ENCODE measurements at regions of chr3 and their contacts with region 1.

Region 1: DNA sequence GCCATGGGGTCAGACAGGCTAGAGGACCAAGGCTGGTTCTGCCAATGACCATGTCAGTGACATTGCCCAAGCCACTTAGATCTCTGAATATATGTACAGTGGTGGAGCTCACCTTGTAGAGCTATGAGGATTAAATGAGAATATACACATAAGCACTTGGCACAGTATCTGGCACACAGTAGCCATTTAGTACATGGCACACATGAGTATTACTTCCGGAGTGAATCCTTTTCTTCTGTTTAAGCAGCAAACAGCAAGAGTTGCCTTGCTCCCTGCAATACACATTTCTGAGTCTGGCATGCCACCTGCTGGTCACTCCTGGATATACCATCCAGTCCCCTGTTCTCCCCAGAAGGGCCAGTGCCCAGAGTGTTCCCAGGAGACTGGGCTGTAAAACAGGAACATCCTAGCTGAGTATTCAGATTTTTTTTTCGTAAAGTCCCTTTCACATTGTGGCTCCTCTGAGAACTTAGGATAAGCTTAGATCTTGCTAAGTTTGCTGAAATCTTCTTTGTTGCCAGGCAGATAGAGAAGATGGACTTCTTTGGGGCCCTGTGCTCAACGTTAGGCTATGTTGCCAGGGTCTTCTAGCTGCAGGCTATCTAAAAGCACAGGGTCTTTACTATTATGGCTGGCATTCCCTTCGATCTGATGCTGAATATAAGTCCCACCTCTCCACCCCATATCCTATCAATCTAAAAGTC is 203.4 kb downstream of the ADAMTS9 start:
- DNase-seq: peak; percentile 76
- H3K4me3 ChIP-seq: no peak overlapping the region; a peak in 1 of 4 replicates
- H3K27ac ChIP-seq: no peak overlapping the region
- H3K4me1 ChIP-seq: peaks cover 0 to 3% of the 10 kb centered on the region in 2 experiments; a peak in 1 of 4 replicates
- H3K27me3 ChIP-seq: no peaks in the 10 kb centered on the region
- CTCF ChIP-seq: peak; percentile 91
- EP300 ChIP-seq: no peak
- RAD21 ChIP-seq: peak; percentile 100

Region 2: DNA sequence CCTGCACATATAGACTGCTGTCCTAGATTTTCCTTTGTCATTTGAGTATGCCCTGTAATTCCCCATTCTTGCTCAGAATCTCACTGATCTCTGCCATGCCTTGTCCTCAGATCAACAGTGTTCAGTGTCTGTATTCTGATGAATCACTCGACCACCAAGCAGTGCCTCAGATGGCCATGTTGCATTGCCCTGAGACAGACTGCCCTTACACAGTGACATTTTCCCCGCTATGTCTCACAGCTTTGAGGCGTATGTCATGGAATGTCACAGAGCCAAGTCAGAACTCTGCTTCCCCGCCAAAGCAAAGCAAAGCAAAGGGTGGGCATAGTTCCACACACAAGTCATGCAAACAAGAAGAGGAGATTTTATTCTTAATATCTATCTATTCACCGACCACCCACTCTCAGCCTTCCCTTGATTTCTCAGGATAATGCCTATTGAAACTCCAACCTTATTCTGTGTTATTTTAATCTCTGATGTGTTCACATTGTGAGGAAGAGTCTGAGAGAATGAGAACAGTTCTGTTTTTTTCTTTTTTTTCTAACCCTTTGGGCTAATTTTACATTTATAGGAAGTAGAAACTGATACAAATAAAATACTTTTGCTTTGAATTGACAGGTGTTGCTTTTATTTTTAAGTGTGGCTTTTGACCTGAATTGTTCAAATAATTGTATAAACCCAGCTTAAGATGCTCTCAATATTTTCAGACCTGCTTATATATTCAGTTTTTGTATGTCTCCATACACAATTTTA is 444.3 kb before region 1 on chr3:
- CTCF ChIA-PET with region 1: interaction called, 84 read pairs
- POLR2A ChIA-PET with region 1: no interaction called
- DNase-seq: peak; percentile 24
- H3K4me3 ChIP-seq: no peak overlapping the region
- H3K27ac ChIP-seq: no peak overlapping the region
- H3K4me1 ChIP-seq: peaks cover 0 to 10% of the 10 kb centered on the region in 2 experiments; a peak in 2 of 4 replicates
- H3K27me3 ChIP-seq: no peaks in the 10 kb centered on the region
- CTCF ChIP-seq: no peak
- EP300 ChIP-seq: no peak
- RAD21 ChIP-seq: no peak

Region 3: DNA sequence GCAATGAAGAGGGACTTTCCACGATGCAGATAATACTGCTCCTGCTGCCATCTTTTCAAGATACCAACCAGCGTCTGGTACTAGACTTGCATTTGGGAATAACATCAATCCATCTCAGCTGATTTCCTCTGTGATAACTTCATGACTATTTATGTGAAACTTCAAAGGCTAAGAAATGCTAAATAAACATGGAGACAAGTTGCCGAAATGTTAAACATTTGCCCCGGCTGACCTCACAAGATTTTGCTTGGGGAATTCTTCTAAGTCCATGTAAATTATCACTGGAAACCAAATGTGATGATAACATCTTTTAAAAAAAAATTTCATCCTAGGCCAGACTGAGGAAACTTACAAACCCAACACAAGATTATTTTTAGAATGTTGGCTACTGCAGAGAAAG is 73.3 kb before region 1 on chr3:
- CTCF ChIA-PET with region 1: interaction called, 15 read pairs
- POLR2A ChIA-PET with region 1: no interaction called
- DNase-seq: no peak
- H3K4me3 ChIP-seq: no peak overlapping the region
- H3K27ac ChIP-seq: no peak overlapping the region
- H3K4me1 ChIP-seq: no peaks in the 10 kb centered on the region
- H3K27me3 ChIP-seq: no peaks in the 10 kb centered on the region
- CTCF ChIP-seq: no peak
- EP300 ChIP-seq: no peak
- RAD21 ChIP-seq: no peak

Region 4: GRCh38 chr3:64445321-64446300 is 38.8 kb before region 1 on chr3:
- CTCF ChIA-PET with region 1: interaction called, 17 read pairs
- POLR2A ChIA-PET with region 1: no interaction called
- DNase-seq: peak; percentile 83
- H3K4me3 ChIP-seq: peak overlapping the region; percentile 73 to 78
- H3K27ac ChIP-seq: no peak overlapping the region; a peak in 1 of 4 replicates
- H3K4me1 ChIP-seq: peaks cover 0 to 27% of the 10 kb centered on the region in 2 experiments; a peak in 2 of 4 replicates
- H3K27me3 ChIP-seq: no peaks in the 10 kb centered on the region
- CTCF ChIP-seq: no peak
- EP300 ChIP-seq: no peak
- RAD21 ChIP-seq: no peak

Region 5: GRCh38 chr3:64462203-64462602 is 22.2 kb before region 1 on chr3:
- CTCF ChIA-PET with region 1: interaction called, 20 read pairs
- POLR2A ChIA-PET with region 1: no interaction called
- DNase-seq: no peak
- H3K4me3 ChIP-seq: peak overlapping the region; percentile 2 to 39; a peak in 3 of 4 replicates
- H3K27ac ChIP-seq: peak overlapping the region in 1 of 2 experiments; percentile 83; a peak in 2 of 4 replicates
- H3K4me1 ChIP-seq: peaks cover 0 to 12% of the 10 kb centered on the region in 2 experiments; a peak in 1 of 4 replicates
- H3K27me3 ChIP-seq: no peaks in the 10 kb centered on the region
- CTCF ChIP-seq: no peak
- EP300 ChIP-seq: peak in 1 of 2 experiments; percentile 68; a peak in 1 of 4 replicates
- RAD21 ChIP-seq: no peak